Head of caudate nucleus (tissue), 42 donors: ENCODE measurements at regions of chr9 and their contacts with region 1.

Region 1: DNA sequence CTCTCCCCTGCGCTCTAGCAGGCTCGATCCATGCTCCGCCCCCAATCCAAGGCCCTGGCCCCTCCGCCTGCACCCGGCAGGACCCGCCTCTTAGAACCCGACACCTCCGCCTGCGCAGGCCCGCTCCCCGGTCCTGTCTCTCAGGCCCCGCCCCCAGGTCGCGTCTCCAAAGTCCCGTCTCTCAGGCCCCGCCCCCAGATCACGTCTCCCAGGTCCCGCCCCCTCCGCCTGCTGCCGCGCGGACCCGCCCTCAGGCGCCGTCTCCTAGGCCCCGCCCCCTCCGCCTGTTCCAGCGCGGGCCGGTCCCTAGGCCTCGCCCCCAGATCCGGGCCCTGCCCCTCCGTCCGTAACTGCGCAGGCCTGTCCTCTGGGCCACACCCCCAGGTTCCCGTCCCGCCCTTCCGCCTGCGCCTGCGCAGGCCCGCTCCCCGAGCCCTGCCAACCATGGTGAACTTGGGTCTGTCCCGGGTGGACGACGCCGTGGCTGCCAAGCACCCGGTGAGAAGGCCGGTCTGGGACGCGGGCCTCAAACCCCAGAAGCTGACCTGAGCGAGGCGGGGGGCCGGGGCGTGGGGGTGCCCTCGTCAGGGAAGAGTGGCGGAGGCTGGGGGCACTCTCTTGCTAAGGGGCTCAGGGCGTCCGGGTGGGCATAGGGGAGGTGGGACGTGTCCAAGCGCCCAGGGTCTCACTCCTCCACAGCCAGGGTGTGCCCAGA is at the start of gene TMEM141:
- DNase-seq: peak in 38 of 42 donors; percentile 99 to 100 (median 100)

Region 2: DNA sequence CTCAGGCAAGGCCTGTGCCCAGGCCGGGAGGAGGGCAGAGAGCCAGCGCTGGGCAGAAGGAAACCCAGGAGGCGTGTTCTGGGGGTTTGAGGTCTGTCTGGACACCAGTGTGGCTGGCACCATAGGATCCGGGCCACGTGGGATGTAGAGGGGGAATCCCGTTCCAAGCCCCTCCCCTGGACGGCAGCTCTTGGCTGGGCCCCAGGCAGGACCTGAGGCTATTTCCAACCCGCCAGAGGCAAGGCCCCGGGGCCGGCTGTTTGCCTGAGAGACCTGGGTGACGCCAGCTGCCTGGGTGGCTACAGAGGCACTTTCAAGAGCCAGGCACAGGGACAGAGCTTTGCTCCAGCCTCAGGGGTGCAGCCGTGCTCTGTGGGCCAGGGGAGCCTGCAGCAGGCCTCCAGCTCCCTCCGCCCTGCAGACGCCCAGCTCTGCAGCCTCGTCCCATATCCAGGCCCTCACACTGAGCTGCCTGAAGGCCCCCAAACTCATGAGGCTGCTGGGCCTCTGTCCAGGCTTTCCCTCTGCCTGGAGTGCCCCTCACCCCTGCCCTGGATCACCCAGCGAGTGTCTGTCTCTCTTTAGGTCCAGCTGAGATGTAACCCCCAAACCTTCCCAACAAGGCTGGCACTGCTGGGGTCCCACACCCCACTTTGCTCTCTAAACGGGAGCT is 185.0 kb before region 1 on chr9:
- intact Hi-C with region 1: no loop called
- DNase-seq: peak in 32 of 42 donors; percentile 14 to 71 (median 50)

Region 3: GRCh38 chr9:136655536-136656182 is 135.4 kb before region 1 on chr9:
- intact Hi-C with region 1: no loop called
- DNase-seq: no peak

Region 4: DNA sequence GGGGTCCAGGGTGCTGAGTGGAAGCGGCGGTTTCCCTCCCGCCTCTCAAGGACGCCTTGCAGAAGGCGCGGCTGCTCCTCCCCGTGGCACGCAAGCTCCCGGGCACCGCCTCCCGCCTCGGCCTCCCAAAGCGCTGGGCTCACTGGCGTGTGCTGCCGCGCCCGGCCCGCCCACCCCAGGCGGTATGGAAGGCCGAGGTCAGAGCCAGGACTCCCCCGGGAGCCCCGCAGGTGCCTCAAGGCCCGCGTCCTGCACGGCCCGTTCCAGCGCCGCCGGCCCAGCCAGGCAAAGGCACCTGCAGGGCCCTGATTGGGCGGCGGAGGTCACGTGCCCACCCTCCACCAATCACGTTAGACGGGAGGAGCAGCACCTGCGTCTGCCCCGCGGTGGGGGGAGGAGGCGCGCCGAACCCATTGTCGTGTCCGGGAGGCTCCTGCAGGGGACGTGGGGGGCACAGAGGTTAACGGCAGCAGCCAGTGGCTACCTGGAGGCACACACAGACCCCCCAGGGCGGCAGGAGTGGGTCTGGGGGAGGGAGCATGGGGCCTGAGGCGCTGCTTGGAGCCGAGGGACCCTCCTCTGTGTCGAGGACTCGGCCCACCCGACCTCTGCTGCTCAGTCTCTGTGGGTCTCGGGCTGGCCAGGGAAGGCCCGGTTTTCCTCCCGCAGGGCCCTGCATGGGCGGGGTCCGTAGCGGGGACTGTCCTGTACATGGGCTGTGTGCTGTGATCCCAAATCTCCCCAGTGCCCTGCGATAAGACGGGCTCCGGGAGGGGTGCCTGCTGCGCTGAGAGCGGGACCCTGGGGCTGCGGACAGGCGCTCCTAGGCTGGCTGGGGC is 159.0 kb after region 1 on chr9:
- intact Hi-C with region 1: loop called (anchors 5 kb)
- DNase-seq: peak; percentile 95 to 100 (median 99)

Region 5: DNA sequence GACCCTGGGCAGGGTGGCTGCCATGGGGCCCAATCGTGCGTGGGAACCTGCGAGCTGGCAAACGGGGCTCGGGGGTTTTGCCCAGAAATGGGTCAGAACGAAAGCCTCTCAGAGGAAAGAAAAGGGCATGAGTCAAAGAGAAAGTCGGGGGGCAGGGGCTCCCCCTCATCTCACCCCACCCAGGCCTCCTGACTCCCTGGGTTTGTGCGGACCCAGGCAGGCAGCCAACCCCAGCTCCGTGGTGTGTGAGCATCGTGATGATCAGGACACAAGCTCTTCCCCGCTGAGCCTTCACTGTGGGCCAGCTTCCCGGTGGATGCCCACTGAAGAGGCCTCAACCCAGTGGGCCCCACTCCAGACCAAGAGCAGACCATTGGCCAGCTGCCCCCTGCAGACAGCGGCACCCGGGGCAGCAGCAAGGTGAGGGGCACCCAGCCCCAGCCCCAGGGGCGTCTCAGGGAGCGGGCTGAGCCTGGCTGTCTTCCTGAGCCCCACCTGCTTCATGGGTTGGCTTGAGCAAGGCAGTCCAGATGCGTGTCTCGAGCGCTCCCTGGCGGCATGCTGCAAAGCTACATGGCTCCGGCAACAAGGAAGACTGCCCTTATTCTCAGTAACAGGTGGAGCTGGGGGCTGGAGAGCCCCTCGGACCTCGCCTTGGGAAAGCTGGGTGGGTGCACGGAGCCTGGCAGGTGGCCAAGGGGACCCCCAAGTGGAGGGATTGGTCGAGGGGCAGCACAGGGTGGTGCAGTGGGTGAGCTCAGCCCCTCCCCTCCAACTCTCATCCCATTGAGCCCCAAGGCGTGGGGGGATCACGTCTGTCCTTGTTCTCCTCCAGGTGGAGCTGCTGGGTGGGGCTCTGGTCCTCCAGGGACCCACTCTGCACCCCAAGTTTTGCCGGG is 244.0 kb after region 1 on chr9:
- intact Hi-C with region 1: loop called (anchors 5 kb)
- DNase-seq: peak; percentile 81 to 95 (median 90)

Region 6: GRCh38 chr9:137046098-137046787 is 255.2 kb after region 1 on chr9 and contains the start of gene NPDC1:
- intact Hi-C with region 1: no loop called
- DNase-seq: peak; percentile 61 to 91 (median 81)

Region 7: GRCh38 chr9:137070201-137070905 is 279.3 kb after region 1 on chr9 and contains the start of gene SAPCD2:
- intact Hi-C with region 1: loop called (anchors 10 kb)
- DNase-seq: peak; percentile 78 to 94 (median 87)